Right ventricle myocardium superior (tissue), 1 donor: ENCODE measurements at regions of chr9 and their contacts with region 1.

Region 1: GRCh38 chr9:128412120-128412790 is 8.4 kb upstream of the CERCAM start:
- DNase-seq: no peak
- ATAC-seq: peak; percentile 46

Region 2: DNA sequence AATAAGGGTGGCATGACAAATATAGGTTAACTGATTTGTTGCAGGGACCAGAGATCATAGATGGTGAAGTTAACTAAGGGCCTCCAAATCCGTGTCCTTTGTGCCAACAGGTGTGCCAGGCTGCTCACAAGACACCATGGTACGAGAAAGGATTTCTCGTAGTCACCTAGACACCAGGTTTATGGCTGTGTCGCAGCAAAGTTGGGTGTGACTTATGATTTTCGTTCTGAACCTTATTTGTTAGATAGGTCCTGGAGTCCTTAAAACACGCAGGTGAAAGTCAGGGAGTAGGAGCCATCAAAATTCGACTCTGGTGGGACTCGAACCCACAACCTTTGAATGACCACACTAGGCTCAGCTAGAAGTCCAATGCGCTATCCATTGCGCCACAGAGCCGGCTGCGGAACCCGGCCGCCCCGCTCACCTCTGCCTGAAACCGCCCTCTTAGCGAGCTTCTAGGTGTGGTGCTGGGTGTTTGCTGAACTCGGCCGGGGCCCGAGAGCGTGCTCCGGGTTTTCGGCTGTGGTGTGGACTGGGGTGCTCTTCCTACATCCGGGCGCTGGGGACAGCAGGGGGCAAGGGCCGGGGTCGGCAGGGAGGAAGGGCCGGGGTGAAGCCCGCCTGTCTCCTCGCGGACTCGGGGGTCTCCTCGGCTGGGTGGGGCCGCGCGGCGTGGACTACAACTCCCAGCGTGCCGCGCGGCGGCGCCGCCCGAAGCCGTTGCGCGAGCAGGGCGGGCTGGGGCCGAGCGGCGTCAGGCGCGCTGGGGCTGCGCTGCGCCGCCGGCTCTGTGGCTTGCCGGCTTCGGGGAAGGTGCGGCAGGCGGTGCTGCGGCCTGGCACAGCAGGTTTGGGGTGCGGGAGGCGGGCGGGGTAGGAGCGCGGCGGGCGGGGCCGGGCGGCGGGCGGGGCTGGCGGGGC is 72.2 kb before region 1 on chr9 and contains the start of gene SLC27A4:
- intact Hi-C with region 1: no loop called
- DNase-seq: peak; percentile 84
- ATAC-seq: peak; percentile 95
- total RNA-seq, gene SLC27A4: 19.0 TPM

Region 3: DNA sequence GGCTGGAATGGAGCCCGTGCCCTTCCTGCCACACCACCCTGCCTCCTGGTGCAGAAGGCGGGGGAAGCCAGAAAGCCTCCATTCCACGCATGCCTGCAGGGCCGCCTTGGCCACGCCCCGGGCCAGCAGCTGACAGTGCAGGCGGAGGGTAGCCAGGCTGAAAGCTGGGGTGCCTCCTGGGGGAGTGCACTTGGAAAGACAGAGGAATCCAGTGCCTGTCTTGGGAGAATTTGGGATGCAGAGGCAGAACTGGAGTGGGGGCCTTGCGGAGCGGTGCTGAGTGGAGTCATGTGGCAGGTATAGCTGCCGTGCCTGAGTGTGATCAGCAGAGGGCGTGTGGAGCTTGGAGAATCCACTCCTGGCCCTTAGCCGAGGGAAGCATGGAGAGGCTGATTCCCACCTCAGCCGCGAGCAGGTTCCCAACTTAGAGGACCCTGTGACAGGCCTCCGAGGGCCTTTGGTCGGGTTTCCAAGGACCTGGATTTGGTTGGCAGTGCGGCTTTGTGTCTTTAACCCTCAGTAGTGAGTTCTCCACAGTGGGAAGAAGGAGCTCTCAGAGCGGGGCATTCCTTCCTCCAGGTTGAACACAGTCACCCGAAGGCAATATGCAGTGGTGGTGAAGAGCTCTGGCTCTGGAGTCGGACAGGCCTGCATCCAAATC is 50.1 kb before region 1 on chr9:
- intact Hi-C with region 1: loop called (anchors 5 kb)
- DNase-seq: peak; percentile 88
- ATAC-seq: peak; percentile 94